CD8-positive, alpha-beta T cell (primary cell): ENCODE measurements at regions of chr15 and their contacts with region 1.

Region 1: DNA sequence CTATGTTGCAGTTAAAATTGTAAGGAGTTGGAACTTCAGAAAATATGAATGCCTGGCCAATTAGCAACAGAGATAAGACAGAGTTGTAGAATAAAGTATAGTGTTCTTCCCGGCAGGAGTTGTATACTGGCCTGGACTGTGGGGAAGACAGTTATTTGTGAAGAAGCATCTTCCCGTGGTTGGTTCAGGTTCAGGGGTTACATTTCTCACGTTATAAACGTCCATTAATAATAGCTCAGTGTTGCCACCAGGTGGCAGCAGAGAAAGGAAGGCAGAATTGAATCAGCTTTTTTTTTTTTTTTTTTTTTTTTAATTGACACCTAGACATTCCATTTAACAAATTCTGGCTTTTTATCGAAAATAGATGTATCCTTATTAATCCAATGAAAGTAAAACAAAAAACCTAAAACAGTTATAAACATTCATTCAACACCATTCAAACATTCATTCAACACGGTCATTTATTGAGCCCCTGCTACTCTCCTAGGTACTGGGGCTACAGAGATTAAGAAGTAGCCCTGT is 66.4 kb upstream of the NR2E3 start:
- DNase-seq: peak; percentile 12 to 70 (median 62)
- ATAC-seq: no peak
- H3K4me3 ChIP-seq: no peak overlapping the region
- H3K4me3 Mint-ChIP-seq: no peak overlapping the region
- H3K27ac ChIP-seq: no peak overlapping the region
- H3K27ac Mint-ChIP-seq: no peak overlapping the region
- H3K4me1 ChIP-seq: no peaks in the 10 kb centered on the region
- H3K4me1 Mint-ChIP-seq: no peaks in the 10 kb centered on the region
- H3K27me3 ChIP-seq: no peaks in the 10 kb centered on the region
- H3K27me3 Mint-ChIP-seq: peaks cover 1% of the 10 kb centered on the region
- CTCF ChIP-seq: peak; percentile 86

Region 2: DNA sequence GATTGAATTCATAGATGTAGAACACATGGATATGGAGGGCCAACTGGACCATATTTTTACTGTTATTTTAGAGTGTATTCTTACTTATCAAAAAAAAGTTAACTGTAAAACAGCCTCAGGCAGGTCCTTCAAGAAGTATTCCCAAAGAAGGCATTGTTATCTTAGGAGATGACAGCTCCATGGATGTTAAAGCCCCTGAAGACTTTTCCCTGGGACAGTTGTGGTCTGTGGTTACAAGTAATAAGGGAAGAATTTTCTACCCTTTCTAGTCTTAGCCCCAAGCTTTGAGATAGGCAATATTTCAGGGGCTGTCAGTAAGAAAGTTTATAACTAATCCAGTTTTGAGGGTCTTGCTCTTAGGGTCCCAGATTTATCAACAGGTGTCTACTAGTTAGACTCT is 788.8 kb before region 1 on chr15:
- CTCF ChIA-PET with region 1: no interaction called
- POLR2A ChIA-PET with region 1: no interaction called
- intact Hi-C with region 1: no loop called
- DNase-seq: no peak
- ATAC-seq: no peak
- H3K4me3 ChIP-seq: no peak overlapping the region
- H3K4me3 Mint-ChIP-seq: no peak overlapping the region
- H3K27ac ChIP-seq: no peak overlapping the region
- H3K27ac Mint-ChIP-seq: no peak overlapping the region
- H3K4me1 ChIP-seq: no peaks in the 10 kb centered on the region
- H3K4me1 Mint-ChIP-seq: no peaks in the 10 kb centered on the region
- H3K27me3 ChIP-seq: peaks cover 0 to 3% of the 10 kb centered on the region in 2 experiments
- H3K27me3 Mint-ChIP-seq: peaks cover 26% of the 10 kb centered on the region
- CTCF ChIP-seq: no peak

Region 3: GRCh38 chr15:71730277-71731144 is 13.4 kb before region 1 on chr15:
- CTCF ChIA-PET with region 1: interaction called, 14 read pairs
- POLR2A ChIA-PET with region 1: no interaction called
- intact Hi-C with region 1: no loop called
- DNase-seq: peak in 3 of 9 experiments; percentile 8 to 46 (median 36)
- ATAC-seq: no peak
- H3K4me3 ChIP-seq: no peak overlapping the region
- H3K4me3 Mint-ChIP-seq: no peak overlapping the region
- H3K27ac ChIP-seq: no peak overlapping the region
- H3K27ac Mint-ChIP-seq: no peak overlapping the region
- H3K4me1 ChIP-seq: no peaks in the 10 kb centered on the region
- H3K4me1 Mint-ChIP-seq: no peaks in the 10 kb centered on the region
- H3K27me3 ChIP-seq: no peaks in the 10 kb centered on the region
- H3K27me3 Mint-ChIP-seq: peaks cover 15% of the 10 kb centered on the region
- CTCF ChIP-seq: peak; percentile 58

Region 4: GRCh38 chr15:71800835-71801745 is 57.2 kb after region 1 on chr15:
- CTCF ChIA-PET with region 1: interaction called, 5 read pairs
- POLR2A ChIA-PET with region 1: no interaction called
- intact Hi-C with region 1: loop called in 1 of 2 experiments (anchors 5 kb)
- DNase-seq: peak in 2 of 9 experiments; percentile 21 to 36
- ATAC-seq: no peak
- H3K4me3 ChIP-seq: no peak overlapping the region
- H3K4me3 Mint-ChIP-seq: no peak overlapping the region
- H3K27ac ChIP-seq: no peak overlapping the region
- H3K27ac Mint-ChIP-seq: no peak overlapping the region
- H3K4me1 ChIP-seq: no peaks in the 10 kb centered on the region
- H3K4me1 Mint-ChIP-seq: no peaks in the 10 kb centered on the region
- H3K27me3 ChIP-seq: no peaks in the 10 kb centered on the region
- H3K27me3 Mint-ChIP-seq: peaks cover 19% of the 10 kb centered on the region
- CTCF ChIP-seq: no peak

Region 5: GRCh38 chr15:71945012-71945411 is 201.1 kb after region 1 on chr15:
- CTCF ChIA-PET with region 1: no interaction called
- POLR2A ChIA-PET with region 1: no interaction called
- intact Hi-C with region 1: no loop called
- DNase-seq: no peak
- ATAC-seq: no peak
- H3K4me3 ChIP-seq: no peak overlapping the region
- H3K4me3 Mint-ChIP-seq: no peak overlapping the region
- H3K27ac ChIP-seq: no peak overlapping the region
- H3K27ac Mint-ChIP-seq: no peak overlapping the region
- H3K4me1 ChIP-seq: no peaks in the 10 kb centered on the region
- H3K4me1 Mint-ChIP-seq: no peaks in the 10 kb centered on the region
- H3K27me3 ChIP-seq: no peaks in the 10 kb centered on the region
- H3K27me3 Mint-ChIP-seq: no peaks in the 10 kb centered on the region
- CTCF ChIP-seq: no peak

Region 6: GRCh38 chr15:72161361-72162260 is 417.7 kb after region 1 on chr15:
- CTCF ChIA-PET with region 1: interaction called, 71 read pairs
- POLR2A ChIA-PET with region 1: interaction called, 4 read pairs
- intact Hi-C with region 1: loop called in 1 of 2 experiments (anchors 1 kb)
- DNase-seq: no peak
- ATAC-seq: no peak
- H3K4me3 ChIP-seq: no peak overlapping the region
- H3K4me3 Mint-ChIP-seq: no peak overlapping the region
- H3K27ac ChIP-seq: no peak overlapping the region
- H3K27ac Mint-ChIP-seq: no peak overlapping the region
- H3K4me1 ChIP-seq: no peaks in the 10 kb centered on the region
- H3K4me1 Mint-ChIP-seq: no peaks in the 10 kb centered on the region
- H3K27me3 ChIP-seq: no peaks in the 10 kb centered on the region
- H3K27me3 Mint-ChIP-seq: no peaks in the 10 kb centered on the region
- CTCF ChIP-seq: no peak